RWPE1 (cell line): ENCODE measurements at regions of chr16 and their contacts with region 1.

Region 1: DNA sequence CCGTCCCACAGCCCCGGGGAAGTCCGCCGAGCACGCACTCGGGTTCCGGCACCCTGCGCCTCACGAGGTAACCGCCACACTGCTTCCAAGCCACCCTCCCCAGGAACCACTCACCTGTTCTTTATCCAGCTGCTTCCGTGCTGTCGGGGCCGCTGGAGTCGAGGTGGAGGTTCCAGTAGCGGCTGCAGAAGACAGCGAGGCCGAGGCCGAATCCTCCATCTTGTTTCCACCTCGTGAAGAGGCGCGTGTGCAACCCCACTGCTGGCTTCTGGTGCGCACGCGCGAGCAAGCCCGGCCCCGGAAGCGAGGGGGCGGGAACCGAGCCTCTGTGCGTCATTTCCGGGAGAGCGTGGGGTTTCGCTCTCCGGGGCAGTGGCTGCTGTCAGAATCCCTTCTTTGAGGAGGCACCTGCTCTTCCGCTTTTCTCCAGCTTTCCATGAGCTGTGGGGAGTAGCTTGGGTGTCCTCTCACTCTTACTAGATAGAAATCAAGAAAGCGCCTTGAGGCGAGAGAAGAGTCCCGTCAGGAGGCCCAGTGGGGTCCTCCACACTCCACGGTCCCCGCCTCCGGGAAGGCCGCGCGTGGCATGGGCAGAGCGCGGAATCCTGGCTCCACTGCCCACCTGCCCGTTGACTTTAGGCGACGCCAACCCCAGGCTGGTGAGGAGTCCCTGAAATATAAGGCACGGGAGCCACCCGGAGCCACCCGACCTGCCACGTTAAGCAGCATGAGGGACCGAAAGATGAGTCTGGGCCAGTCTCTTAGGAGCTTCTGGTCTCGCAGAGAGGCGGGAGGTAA is at the start of gene RSL1D1:
- DNase-seq: peak; percentile 99
- H3K27ac ChIP-seq: peak within 1 kb of the TSS; percentile 77
- CTCF ChIP-seq: no peak

Region 2: GRCh38 chr16:11871193-11871592 is 19.7 kb after region 1 on chr16:
- CTCF ChIA-PET with region 1: interaction called, 3 read pairs
- POLR2A ChIA-PET with region 1: interaction called, 10 read pairs
- DNase-seq: no peak
- H3K27ac ChIP-seq: no peak overlapping the region
- CTCF ChIP-seq: 0 out of 2 replicates have a peak, but pooled peaks have one; percentile 7